IMR-90 (cell line): ENCODE measurements at regions of chr3 and their contacts with region 1.

Region 1: GRCh38 chr3:137761197-137762127 is 2.7 kb upstream of the SOX14 start:
- DNase-seq: no peak
- ATAC-seq: no peak
- H3K4me3 ChIP-seq: no peak overlapping the region
- H3K27ac ChIP-seq: no peak overlapping the region
- H3K4me1 ChIP-seq: no peaks in the 10 kb centered on the region
- H3K27me3 ChIP-seq: peaks cover 54% of the 10 kb centered on the region
- CTCF ChIP-seq: no peak
- POLR2A ChIP-seq: no peak
- RAD21 ChIP-seq: no peak

Region 2: GRCh38 chr3:137121704-137122314 is 639.7 kb before region 1 on chr3:
- CTCF ChIA-PET with region 1: interaction called, 12 read pairs
- POLR2A ChIA-PET with region 1: no interaction called
- dilution Hi-C with region 1: no loop called
- in situ Hi-C with region 1: no loop called
- intact Hi-C with region 1: no loop called
- DNase-seq: peak; percentile 44
- ATAC-seq: peak; percentile 49; the same call in 1 of the 2 replicates
- H3K4me3 ChIP-seq: no peak overlapping the region
- H3K27ac ChIP-seq: no peak overlapping the region
- H3K4me1 ChIP-seq: no peaks in the 10 kb centered on the region
- H3K27me3 ChIP-seq: no peaks in the 10 kb centered on the region
- CTCF ChIP-seq: peak; percentile 54
- POLR2A ChIP-seq: no peak
- RAD21 ChIP-seq: peak; percentile 31; the same call in 1 of the 2 replicates

Region 3: DNA sequence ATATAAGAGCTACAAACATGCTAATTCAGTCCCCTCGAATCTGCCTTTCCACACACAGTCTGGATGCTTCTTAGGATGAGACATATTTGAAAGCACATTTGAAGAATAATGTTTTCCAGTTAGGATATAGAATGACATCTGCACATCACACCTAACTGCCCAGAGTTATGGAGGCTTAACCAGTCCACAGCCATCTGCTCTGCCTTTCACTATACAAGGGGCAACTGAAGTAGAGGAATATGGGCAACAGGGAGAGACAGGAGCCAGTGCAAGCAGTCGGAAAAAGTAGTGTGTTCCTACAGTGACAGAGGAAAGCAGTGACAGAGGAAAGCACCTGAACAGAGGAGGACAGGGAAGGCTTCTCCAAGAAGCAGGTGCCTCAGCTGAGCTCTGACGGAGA is 169.5 kb after region 1 on chr3:
- CTCF ChIA-PET with region 1: no interaction called
- POLR2A ChIA-PET with region 1: no interaction called
- dilution Hi-C with region 1: no loop called
- in situ Hi-C with region 1: no loop called
- intact Hi-C with region 1: no loop called
- DNase-seq: no peak
- ATAC-seq: no peak
- H3K4me3 ChIP-seq: no peak overlapping the region
- H3K27ac ChIP-seq: no peak overlapping the region
- H3K4me1 ChIP-seq: no peaks in the 10 kb centered on the region
- H3K27me3 ChIP-seq: no peaks in the 10 kb centered on the region
- CTCF ChIP-seq: no peak
- POLR2A ChIP-seq: no peak
- RAD21 ChIP-seq: no peak